HCT116 (cell line): ENCODE measurements at regions of chr11 and their contacts with region 1.

Region 1: DNA sequence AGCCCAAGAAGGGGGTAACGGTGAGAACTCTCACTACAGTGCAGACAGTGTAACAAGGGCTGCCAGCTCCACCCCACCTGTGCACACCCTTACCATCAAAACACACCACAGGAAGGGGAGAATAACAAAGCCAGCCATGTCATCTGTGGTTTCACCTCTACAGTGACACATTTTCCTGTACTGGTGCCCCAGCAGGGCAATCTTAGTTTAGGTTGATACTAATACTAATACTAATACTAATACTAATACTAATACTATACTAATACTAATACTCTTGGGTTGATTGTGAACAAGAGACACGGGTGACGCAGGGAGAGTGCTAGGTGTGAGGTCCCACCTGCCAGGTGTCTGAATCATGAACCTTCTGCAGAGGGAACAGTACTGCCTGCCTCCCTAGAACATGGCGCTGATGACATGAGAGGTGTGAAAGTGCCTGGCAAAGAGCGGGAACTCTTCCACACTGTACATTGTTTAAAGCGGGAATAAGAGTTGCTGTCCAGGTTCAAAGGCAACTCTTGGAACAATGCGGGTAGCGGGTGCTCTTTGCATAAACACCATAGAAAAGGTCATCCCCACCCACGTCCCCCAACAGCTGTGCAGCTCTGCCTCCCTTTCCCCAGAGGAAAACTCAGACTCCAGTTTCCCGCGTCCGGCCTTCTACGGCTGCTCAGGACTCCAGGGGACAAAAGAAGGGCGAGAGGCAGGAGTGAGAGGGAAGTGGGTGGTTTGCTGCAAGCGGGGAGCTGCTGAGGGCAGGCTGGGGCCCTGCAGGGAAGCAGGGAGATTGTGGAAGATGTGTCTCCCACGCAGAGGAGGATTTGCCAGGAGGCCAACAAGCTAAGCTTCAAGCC is 25.0 kb upstream of the TMPRSS4 start:
- DNase-seq: no peak
- ATAC-seq: no peak
- H3K4me3 ChIP-seq: no peak overlapping the region
- H3K27ac ChIP-seq: no peak overlapping the region
- H3K4me1 ChIP-seq: peaks cover 0 to 6% of the 10 kb centered on the region in 2 experiments; a peak in 2 of 4 replicates
- H3K27me3 ChIP-seq: no peaks in the 10 kb centered on the region; the same call in 1 of the 2 replicates
- CTCF ChIP-seq: no peak
- POLR2A ChIP-seq: no peak
- RAD21 ChIP-seq: no peak

Region 2: DNA sequence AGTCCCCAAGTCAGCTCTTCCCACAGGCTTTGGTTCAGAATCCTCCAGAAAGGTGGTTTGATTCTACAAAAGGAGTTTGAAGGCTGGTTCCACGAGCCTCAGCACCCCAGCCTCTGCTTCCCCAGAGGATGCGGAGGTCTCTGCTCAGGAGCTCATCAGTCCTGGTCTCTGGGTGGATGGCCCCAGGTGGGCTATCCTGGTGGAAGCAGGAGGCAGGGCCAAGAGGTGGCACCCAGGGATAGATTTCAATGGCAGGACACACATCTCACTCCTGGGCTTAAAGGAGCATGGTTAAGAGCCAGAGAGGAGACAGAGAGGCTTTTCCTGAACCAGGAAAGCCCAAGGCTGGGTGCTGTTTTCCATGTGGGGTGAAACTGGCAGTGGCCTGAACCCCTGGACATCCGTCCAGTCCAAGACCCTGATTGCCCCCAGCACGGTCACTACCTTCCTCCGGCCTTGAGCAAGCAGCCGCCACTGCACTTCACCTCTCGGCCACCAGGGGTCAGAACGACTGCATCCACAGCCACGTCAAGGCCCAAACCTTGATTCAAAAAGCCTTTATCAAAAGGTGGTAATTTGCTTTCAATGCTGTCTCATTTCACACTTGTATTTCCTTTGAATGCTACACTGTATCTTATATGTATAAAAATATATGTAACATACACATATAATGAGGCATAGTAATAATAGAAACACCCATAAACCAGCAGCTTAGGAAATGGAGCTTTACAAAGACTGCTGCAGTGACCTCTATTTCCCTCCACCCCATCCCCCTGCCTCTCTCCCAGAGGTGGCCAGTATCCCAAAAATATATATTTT is 208.0 kb before region 1 on chr11:
- CTCF ChIA-PET with region 1: interaction called, 5 read pairs
- POLR2A ChIA-PET with region 1: no interaction called
- RAD21 ChIA-PET with region 1: interaction called in 1 of 2 experiments, 3 read pairs
- intact Hi-C with region 1: loop called (anchors 1 kb)
- DNase-seq: peak; percentile 54
- ATAC-seq: peak; percentile 95
- H3K4me3 ChIP-seq: no peak overlapping the region
- H3K27ac ChIP-seq: no peak overlapping the region
- H3K4me1 ChIP-seq: no peaks in the 10 kb centered on the region
- H3K27me3 ChIP-seq: no peaks in the 10 kb centered on the region
- CTCF ChIP-seq: peak; percentile 94 to 99 (median 95)
- POLR2A ChIP-seq: no peak
- RAD21 ChIP-seq: peak; percentile 94

Region 3: GRCh38 chr11:117907251-117907981 is 144.4 kb before region 1 on chr11:
- CTCF ChIA-PET with region 1: interaction called, 11 read pairs
- POLR2A ChIA-PET with region 1: no interaction called
- RAD21 ChIA-PET with region 1: interaction called in 1 of 2 experiments, 5 read pairs
- intact Hi-C with region 1: no loop called
- DNase-seq: peak; percentile 94
- ATAC-seq: peak; percentile 97
- H3K4me3 ChIP-seq: peak overlapping the region; percentile 52 to 66
- H3K27ac ChIP-seq: peak overlapping the region; percentile 42
- H3K4me1 ChIP-seq: peaks cover 9 to 32% of the 10 kb centered on the region in 2 experiments
- H3K27me3 ChIP-seq: no peaks in the 10 kb centered on the region
- CTCF ChIP-seq: no peak
- POLR2A ChIP-seq: peak; percentile 91
- RAD21 ChIP-seq: no peak

Region 4: DNA sequence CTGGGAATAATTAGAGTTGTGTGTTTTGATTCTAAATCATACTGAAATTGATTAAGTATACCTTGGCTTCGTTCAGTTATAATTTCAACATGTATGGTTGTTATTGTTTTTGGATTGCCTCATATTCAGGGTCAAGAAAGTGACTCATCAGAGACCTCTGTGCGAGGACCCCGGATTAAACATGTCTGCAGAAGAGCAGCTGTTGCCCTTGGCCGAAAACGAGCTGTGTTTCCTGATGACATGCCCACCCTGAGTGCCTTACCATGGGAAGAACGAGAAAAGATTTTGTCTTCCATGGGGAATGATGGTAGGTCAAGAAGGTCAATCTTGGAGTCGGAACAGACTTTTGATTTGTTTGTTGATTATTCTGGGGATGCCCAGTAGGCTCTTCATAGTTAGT is 424.8 kb after region 1 on chr11:
- CTCF ChIA-PET with region 1: no interaction called
- POLR2A ChIA-PET with region 1: no interaction called
- RAD21 ChIA-PET with region 1: no interaction called
- intact Hi-C with region 1: no loop called
- DNase-seq: no peak
- ATAC-seq: no peak
- H3K4me3 ChIP-seq: no peak overlapping the region
- H3K27ac ChIP-seq: no peak overlapping the region
- H3K4me1 ChIP-seq: no peaks in the 10 kb centered on the region
- H3K27me3 ChIP-seq: no peaks in the 10 kb centered on the region
- CTCF ChIP-seq: no peak
- POLR2A ChIP-seq: no peak
- RAD21 ChIP-seq: no peak